ENCODE measurements at regions of chr11 and their contacts with region 1.

Region 1: GRCh38 chr11:61747192-61747966 is 5.1 kb upstream of the MYRF start:
- DNase-seq: peak; percentile 67 to 92 (median 86)
- H3K4me3 ChIP-seq: peak overlapping the region in 1 of 59 donors; percentile 12
- H3K27ac ChIP-seq: peak overlapping the region in 57 of 59 donors; percentile 74 to 99 (median 92)
- H3K27me3 ChIP-seq: peaks cover 0 to 2% (median 0%) of the 10 kb centered on the region in 45 donors
- CTCF ChIP-seq: peak; percentile 57 to 99 (median 92)

Region 2: DNA sequence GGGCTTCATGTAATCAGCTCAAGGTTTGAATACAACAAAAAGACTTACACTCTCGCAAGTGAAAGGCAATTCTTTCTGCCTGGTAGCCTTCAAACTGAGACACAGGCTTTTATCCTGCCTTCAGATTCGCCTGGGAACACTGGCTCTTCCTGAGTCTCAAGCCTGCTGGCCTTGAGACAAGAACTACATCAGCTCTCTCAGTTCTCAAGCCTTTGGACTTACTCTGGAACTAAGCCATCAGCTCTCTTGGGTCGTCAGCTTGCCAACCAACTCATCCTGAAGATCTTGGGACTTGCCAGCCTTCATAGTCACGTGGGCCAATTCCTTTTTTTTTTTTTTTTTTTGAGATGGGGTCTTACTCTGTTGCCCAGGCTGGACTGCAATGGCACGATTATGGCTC is 274.5 kb before region 1 on chr11:
- intact Hi-C with region 1: no loop called
- DNase-seq: peak in 1 of 10 donors; percentile 24
- H3K4me3 ChIP-seq: no peak overlapping the region
- H3K27ac ChIP-seq: peak overlapping the region in 54 of 59 donors; percentile 7 to 85 (median 63)
- H3K27me3 ChIP-seq: no peaks in the 10 kb centered on the region
- CTCF ChIP-seq: no peak

Region 3: DNA sequence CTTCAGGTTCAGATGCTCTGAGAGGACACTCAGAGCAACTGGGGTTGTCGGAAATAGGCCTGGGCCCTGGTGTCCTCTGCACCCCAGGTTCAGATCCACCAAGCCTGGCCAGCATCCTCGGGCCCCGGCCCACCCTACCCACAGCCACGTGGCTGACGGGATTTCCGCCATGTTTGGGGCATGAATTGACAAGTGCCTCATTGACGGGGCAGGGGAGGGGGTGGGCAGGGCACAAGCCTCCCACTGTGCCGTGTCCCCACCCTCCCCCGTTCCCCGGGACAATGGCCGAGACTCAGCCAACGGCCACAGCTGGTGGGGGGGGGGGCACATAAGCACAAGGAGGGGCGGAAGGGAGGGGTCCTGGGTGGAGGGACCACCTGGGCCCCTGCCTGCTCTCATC is 13.6 kb after region 1 on chr11:
- intact Hi-C with region 1: loop called in 1 of 2 experiments (anchors 1 kb)
- DNase-seq: peak; percentile 26 to 96 (median 88)
- H3K4me3 ChIP-seq: peak overlapping the region in 36 of 59 donors; percentile 5 to 83 (median 32)
- H3K27ac ChIP-seq: peak overlapping the region in 58 of 59 donors; percentile 51 to 99 (median 95)
- H3K27me3 ChIP-seq: no peaks in the 10 kb centered on the region
- CTCF ChIP-seq: peak in 4 of 56 donors; percentile 7 to 20 (median 12)

Region 4: GRCh38 chr11:61776551-61777075 is 29.2 kb after region 1 on chr11:
- intact Hi-C with region 1: loop called in 1 of 2 experiments (anchors 1 kb)
- DNase-seq: peak in 8 of 10 donors; percentile 51 to 76 (median 67)
- H3K4me3 ChIP-seq: peak overlapping the region in 15 of 59 donors; percentile 30 to 59 (median 48)
- H3K27ac ChIP-seq: peak overlapping the region in 58 of 59 donors; percentile 25 to 99 (median 78)
- H3K27me3 ChIP-seq: no peaks in the 10 kb centered on the region
- CTCF ChIP-seq: peak in 55 of 56 donors; percentile 49 to 84 (median 70)

Region 5: GRCh38 chr11:61891331-61892084 is 144.1 kb after region 1 on chr11 and contains the start of gene FADS3:
- intact Hi-C with region 1: loop called in 1 of 2 experiments (anchors 5 kb)
- DNase-seq: peak; percentile 66 to 90 (median 76)
- H3K4me3 ChIP-seq: peak within 1 kb of the TSS; percentile 52 to 97 (median 87)
- H3K27ac ChIP-seq: peak within 1 kb of the TSS; percentile 3 to 96 (median 91)
- H3K27me3 ChIP-seq: no peaks in the 10 kb centered on the region
- CTCF ChIP-seq: peak in 18 of 56 donors; percentile 3 to 59 (median 21)
- total RNA-seq, gene FADS3: 52.0 to 134 (median 87.6) TPM